ENCODE measurements at regions of chr3 and their contacts with region 1.

Region 1: DNA sequence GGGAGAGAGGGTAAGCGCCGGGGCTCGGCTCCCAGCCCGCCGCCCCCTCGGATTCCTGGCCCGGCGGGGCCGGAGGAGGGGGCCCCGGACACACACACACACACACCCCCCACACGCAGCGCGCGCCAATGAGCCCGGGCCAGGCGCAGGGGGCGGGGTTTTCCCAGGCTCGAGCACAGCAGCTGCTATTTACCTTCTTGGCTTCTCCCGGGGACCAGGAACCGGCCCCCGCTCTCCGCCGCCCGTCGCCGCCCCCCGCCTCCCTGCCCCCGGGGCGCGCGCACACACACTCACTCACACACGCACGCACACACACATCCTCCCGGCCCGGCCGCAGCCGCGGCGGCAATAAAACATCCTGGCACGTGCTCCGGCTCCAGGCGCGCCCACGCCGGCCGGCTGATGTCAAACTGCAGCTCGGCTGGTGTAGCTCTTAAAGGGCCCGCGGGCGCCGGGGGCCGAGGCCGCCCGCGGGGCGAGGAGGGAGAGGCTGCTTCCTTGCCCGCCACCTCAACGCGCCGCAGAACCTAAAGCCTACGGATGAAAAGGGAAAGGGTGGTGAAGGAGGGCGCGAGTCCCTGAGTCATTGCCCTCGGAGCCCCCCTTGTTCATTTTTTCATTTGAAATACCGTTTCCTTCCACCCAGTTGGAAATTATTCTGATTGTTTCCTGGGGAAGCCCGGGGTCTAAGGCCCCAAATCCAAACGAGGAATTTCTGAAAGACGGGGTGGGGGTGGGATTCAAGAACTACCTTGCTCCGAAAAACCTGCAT is 1.0 kb upstream of the HES1 start:
- DNase-seq: peak; percentile 91 to 97 (median 95)
- H3K4me3 ChIP-seq: peak overlapping the region; percentile 52
- H3K27ac ChIP-seq: peak overlapping the region; percentile 86 to 96
- H3K4me1 ChIP-seq: peaks cover 8% of the 10 kb centered on the region
- H3K27me3 ChIP-seq: no peaks in the 10 kb centered on the region
- CTCF ChIP-seq: no peak
- EP300 ChIP-seq: peak; percentile 53
- POLR2A ChIP-seq: peak; percentile 28

Region 2: DNA sequence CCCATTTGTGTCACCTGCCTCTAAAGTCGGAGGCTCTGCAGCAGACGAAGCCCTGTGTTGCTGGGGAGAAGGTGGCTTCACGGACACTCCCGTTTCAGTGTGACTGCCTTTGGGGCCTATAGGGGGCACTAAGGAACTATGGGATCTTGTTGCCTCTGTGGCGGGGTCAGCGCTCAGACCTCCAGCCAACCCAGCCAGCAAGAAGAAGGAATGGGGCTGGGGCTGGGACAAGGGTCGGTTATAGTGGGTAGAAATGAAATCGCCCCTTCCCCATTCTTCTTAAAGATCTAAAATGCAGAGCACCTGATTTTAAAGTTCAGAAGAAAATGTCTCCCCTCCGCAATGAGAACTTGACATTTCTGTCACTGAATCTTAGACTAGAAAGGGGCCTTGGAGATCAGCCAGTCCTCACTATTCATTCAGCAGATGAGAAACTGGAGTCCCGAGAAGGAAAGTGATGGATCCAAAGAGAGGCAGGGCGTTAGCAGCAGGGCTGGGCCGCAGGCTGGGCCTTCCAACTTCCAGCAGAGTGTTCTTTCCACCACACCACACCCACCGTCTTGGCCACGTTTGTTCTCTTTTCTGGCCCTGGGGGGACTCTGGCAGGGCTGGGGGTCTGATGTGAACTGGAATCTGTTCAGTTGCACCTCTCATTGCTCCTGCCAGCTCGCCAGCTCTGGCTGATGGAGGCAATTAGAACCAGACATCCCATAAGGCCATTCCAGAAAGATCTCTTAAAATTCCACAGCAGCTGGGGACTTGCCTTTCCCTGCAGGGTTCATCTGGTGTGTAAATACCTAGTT is 346.6 kb before region 1 on chr3:
- intact Hi-C with region 1: loop called in 3 of 4 experiments (anchors 5 to 10 kb)
- DNase-seq: peak; percentile 44 to 63 (median 55)
- H3K4me3 ChIP-seq: no peak overlapping the region
- H3K27ac ChIP-seq: no peak overlapping the region
- H3K4me1 ChIP-seq: no peaks in the 10 kb centered on the region
- H3K27me3 ChIP-seq: no peaks in the 10 kb centered on the region
- CTCF ChIP-seq: peak; percentile 14 to 56 (median 45)
- EP300 ChIP-seq: no peak
- POLR2A ChIP-seq: no peak

Region 3: GRCh38 chr3:193872265-193872753 is 262.6 kb before region 1 on chr3:
- intact Hi-C with region 1: no loop called
- DNase-seq: no peak
- H3K4me3 ChIP-seq: no peak overlapping the region
- H3K27ac ChIP-seq: no peak overlapping the region
- H3K4me1 ChIP-seq: peaks cover 2% of the 10 kb centered on the region
- H3K27me3 ChIP-seq: no peaks in the 10 kb centered on the region
- CTCF ChIP-seq: no peak
- EP300 ChIP-seq: no peak
- POLR2A ChIP-seq: no peak

Region 4: DNA sequence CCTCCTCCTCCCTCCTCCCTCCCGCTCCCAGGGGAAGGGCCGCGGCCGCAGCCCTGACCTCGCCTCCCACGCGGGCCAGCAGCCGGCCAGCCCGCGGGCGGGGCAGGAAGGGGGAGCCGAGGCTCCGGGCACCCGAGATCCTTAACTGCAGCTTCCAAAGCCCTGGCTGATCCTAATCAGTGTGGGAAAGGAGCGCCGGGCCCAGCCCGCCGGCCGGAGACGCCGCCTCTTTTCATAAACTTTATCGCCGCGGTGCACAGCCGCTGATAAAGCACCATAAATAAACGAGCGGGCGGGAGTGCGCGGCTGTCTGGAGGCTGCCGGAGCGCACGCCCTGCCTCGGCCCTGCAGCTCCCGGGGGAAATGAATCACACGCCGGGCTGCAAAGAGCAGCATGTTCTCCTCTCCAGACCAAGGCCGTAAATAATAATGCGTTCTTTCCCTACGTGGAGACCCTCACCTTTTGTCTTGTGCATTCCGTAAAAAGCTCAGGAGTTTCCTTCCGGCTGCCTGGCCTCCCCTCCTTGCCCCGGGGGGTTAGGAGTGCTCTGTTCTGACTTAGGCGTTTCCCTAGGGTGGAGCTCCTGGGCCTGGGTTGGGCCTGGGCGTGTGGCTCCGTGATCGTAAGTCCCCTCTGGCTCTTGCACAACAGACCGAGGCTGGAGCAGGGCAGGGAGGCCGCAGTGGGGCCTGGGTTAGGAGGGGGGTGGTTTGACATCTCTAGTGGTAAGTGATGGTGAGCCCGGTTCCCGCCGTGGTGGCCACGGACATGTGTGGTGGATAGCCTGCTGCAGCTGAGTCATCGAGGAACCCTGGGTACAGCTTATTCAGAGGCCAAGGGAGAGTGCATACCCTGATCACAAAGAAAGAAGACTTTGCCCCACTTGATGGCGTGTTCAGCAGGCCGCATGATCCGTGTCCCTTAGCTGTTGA is 131.6 kb before region 1 on chr3:
- intact Hi-C with region 1: loop called in 3 of 4 experiments (anchors 2 to 10 kb)
- DNase-seq: peak; percentile 90 to 94 (median 92)
- H3K4me3 ChIP-seq: peak overlapping the region; percentile 44
- H3K27ac ChIP-seq: peak overlapping the region; percentile 23 to 69
- H3K4me1 ChIP-seq: peaks cover 11% of the 10 kb centered on the region
- H3K27me3 ChIP-seq: no peaks in the 10 kb centered on the region
- CTCF ChIP-seq: peak in 1 of 3 donors; percentile 0
- EP300 ChIP-seq: no peak
- POLR2A ChIP-seq: peak; percentile 16

Region 5: DNA sequence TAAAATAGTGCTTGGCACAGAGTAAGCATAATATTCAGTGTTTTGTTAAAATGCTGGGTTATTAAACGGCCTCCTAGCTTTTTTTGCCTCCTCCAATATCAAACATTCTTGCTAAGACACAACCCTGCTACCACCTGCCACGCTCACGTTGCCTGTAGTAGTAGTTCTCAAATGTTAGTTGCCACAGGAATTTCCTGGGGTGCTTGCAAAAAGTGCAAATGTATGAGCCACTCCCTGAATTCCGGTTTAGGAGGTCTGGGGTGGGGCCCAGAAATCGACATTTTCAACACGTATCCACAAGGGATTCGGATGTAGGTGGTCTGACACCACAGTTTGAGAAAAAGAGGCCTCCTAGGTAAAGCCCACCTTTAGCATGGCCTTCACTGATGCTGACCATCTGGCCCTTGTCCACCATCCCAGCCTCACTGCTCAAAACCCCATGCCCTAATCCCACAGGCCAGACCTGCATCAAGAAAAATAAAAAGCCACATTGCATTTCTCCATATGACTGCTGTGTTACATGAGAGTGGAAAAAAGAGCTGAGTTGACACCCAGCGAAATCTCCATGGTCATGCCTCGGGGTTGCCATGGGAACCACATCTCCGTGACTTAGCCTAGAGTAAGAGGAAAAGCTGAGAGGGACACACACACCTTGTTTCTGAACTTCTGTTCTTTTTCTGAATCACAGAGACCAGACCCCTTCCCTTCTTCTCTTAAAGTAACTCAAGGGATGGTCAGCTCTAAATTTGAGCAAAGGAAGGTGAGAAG is 115.4 kb before region 1 on chr3:
- intact Hi-C with region 1: no loop called
- DNase-seq: no peak
- H3K4me3 ChIP-seq: no peak overlapping the region
- H3K27ac ChIP-seq: no peak overlapping the region
- H3K4me1 ChIP-seq: peaks cover 2% of the 10 kb centered on the region
- H3K27me3 ChIP-seq: no peaks in the 10 kb centered on the region
- CTCF ChIP-seq: no peak
- EP300 ChIP-seq: no peak
- POLR2A ChIP-seq: no peak

Region 6: GRCh38 chr3:194064380-194065332 is 70.3 kb before region 1 on chr3:
- intact Hi-C with region 1: no loop called
- DNase-seq: no peak
- H3K4me3 ChIP-seq: no peak overlapping the region
- H3K27ac ChIP-seq: no peak overlapping the region
- H3K4me1 ChIP-seq: no peaks in the 10 kb centered on the region
- H3K27me3 ChIP-seq: no peaks in the 10 kb centered on the region
- CTCF ChIP-seq: no peak
- EP300 ChIP-seq: no peak
- POLR2A ChIP-seq: no peak

Region 7: DNA sequence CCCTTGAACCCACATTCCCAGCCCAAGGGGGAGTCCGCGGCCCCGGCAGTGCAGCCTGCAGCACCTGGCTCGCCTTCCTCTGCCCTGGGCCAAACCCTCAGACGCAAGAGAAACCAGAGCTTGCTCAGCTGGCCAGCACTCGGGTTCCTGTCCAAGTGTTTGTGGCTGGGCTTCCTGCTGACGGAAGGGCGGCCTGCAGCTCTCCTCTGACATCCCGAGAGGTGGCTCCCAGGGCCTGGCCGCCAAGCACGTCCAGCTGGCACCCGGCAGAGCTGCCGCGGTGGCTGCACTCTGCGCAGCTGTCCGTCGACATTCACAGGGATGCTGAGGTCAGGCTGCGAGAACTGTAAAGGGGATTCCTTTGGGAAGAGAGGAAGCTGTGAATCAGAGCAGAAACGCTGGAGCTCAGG is 130.5 kb after region 1 on chr3:
- intact Hi-C with region 1: loop called (anchors 5 kb)
- DNase-seq: peak; percentile 83 to 92 (median 87)
- H3K4me3 ChIP-seq: no peak overlapping the region
- H3K27ac ChIP-seq: peak overlapping the region in 1 of 2 donors; percentile 47
- H3K4me1 ChIP-seq: peaks cover 20% of the 10 kb centered on the region
- H3K27me3 ChIP-seq: no peaks in the 10 kb centered on the region
- CTCF ChIP-seq: no peak
- EP300 ChIP-seq: peak; percentile 11
- POLR2A ChIP-seq: no peak